ENCODE measurements at regions of chr16 and their contacts with region 1.

Region 1: GRCh38 chr16:84084570-84085270 is 32.0 kb downstream of the MBTPS1 start:
- H3K4me3 ChIP-seq: no peak overlapping the region
- H3K27ac ChIP-seq: no peak overlapping the region
- H3K4me1 ChIP-seq: no peaks in the 10 kb centered on the region
- CTCF ChIP-seq: peak; percentile 74

Region 2: GRCh38 chr16:83835586-83836566 is 248.8 kb before region 1 on chr16:
- CTCF ChIA-PET with region 1: no interaction called
- POLR2A ChIA-PET with region 1: no interaction called
- H3K4me3 ChIP-seq: no peak overlapping the region
- H3K27ac ChIP-seq: no peak overlapping the region
- H3K4me1 ChIP-seq: no peaks in the 10 kb centered on the region; the same call in 1 of the 2 replicates
- CTCF ChIP-seq: no peak

Region 3: GRCh38 chr16:84048270-84048669 is 36.5 kb before region 1 on chr16:
- CTCF ChIA-PET with region 1: no interaction called
- POLR2A ChIA-PET with region 1: no interaction called
- H3K4me3 ChIP-seq: no peak overlapping the region
- H3K27ac ChIP-seq: no peak overlapping the region
- H3K4me1 ChIP-seq: peaks cover 7% of the 10 kb centered on the region; the same call in 1 of the 2 replicates
- CTCF ChIP-seq: no peak

Region 4: DNA sequence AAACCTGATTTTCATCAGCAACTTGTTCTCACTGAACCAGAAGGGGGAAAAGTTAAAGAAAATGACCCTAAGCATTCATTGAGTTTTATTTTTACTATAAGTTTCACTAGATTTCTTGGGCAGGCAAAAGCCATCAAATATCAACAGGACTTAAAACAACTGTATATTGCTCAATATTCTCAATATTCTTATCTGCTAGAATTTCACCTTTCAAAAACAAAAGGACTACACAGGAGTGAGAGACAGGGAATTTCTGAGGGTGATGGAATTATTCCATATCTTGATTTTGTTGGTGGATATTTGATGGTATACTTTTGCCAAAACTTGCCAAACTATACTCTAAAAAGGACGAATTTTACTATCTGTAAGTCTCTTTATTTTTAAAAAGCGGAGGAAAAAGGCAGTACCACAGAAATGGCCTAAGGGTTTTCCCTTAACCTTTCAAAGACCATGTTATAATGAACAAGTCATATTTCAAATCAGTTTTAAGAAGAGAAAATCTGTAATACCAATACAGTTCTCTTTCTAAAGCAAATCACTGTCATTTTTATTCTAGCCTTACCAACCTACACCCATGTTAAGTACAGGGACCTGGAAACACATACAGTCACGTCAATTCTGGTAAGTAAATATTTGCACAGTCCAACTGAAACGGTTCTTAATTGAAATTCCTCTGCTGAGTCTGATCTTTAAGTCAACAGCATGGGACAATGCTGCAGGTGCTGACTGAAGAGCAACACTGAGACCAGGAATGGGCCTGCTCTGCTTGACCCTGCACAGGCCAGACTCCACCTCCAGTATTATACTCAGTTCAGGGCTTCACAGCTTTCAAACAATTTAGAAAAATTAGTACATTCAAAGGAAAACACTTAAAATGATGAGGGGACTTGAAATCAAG is 11.6 kb after region 1 on chr16:
- CTCF ChIA-PET with region 1: interaction called, 19 read pairs
- POLR2A ChIA-PET with region 1: no interaction called
- H3K4me3 ChIP-seq: no peak overlapping the region
- H3K27ac ChIP-seq: no peak overlapping the region
- H3K4me1 ChIP-seq: peaks cover 3% of the 10 kb centered on the region; the same call in 1 of the 2 replicates
- CTCF ChIP-seq: no peak

Region 5: DNA sequence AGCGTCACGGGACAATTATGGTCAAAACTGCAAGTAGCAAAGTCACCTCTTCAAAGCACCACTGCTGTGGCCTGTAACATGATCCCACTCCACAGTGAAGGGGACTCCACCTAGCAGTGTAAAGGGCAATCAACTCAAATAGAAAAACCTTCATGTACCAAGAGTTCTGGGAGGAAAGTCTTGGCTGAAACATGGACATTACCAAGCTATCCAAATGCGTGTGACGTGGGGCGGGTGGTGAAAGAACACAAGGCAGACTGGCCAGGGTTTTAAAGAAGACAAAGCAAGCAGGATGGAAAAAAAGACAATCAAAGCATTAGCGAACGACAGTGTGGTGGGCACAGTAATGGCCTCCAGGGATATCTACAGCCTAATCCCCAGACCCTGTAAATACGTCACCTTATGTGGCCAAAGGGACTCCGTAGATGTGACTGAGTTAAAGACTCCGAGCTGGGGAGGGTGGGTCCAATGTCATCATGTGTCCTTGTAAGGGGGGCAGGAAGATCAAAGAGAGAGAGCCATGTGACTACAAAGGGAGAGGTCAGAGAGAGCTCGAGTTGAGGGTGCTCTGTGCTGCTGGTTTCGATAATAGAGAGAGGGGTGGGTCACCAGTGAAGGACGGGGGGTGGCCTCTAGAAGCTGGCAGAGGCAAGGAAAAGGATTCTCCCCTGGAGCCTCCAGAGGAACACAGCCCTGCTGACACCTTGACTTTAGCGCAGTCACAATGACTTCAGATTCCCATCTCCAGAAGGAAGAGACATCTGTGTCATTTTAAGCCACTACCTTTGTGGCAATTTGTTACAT is 54.3 kb after region 1 on chr16:
- CTCF ChIA-PET with region 1: interaction called, 12 read pairs
- POLR2A ChIA-PET with region 1: no interaction called
- H3K4me3 ChIP-seq: no peak overlapping the region
- H3K27ac ChIP-seq: peak overlapping the region; percentile 10; the same call in 1 of the 2 replicates
- H3K4me1 ChIP-seq: peaks cover 7% of the 10 kb centered on the region; the same call in 1 of the 2 replicates
- CTCF ChIP-seq: no peak

Region 6: DNA sequence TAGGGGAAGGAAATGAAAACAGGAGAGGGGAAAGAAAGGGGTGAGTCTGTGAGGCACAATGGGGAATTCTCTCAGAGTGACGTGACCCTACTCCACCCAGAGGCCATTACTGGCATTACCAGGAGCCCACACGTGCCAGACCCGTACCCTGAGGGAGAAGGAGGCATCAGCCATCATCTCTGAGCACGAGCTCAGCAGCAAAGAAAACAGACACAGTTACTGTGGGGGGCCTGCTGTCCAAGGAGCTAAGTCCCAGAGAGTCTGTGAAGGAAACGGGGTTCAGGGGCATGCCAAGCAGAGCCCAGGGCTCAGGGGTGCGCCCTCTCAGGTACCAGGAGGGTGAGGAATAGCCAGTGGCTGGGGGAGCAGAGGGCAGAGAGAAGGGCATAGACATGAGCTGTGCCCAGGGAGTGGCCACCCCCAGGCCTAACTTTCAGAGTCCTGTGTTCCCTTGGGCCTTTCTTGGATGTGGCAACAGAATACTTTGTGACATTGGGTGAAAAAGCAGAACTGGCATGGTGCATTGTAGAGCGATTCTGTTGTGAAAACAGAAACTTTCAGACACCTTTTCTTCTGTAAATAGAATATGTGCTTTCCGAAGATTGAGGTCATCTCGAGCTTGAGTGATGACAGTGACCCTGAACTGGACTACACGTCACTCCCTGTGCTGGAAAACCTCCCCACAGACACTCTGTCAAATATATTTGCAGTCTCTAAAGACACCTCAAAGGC is 90.8 kb after region 1 on chr16:
- CTCF ChIA-PET with region 1: interaction called, 65 read pairs
- POLR2A ChIA-PET with region 1: no interaction called
- H3K4me3 ChIP-seq: no peak overlapping the region
- H3K27ac ChIP-seq: no peak overlapping the region
- H3K4me1 ChIP-seq: peaks cover 9% of the 10 kb centered on the region
- CTCF ChIP-seq: peak; percentile 67